Right cardiac atrium (tissue), 5 donors: ENCODE measurements at regions of chr1 and their contacts with region 1.

Region 1: DNA sequence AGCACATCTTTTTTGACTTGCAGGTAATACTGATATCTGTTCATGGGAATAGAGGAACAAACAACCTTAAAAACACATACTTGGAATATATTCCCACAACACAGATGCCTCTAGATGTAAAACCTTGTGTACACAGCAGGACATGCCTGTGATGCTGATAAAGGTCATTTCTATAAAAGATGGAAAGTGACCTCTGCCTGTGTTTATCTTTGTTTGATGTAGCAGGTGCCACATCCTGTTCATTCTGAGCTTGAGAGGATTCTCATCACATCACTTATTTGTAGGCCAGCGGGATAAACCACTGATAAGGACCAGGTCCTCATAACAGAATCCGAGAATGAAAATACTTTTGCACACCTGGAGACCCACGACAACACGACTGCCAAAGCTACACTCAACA is 133.7 kb downstream of the SMYD2 start:
- DNase-seq: no peak
- ATAC-seq: no peak
- H3K4me3 ChIP-seq: no peak overlapping the region
- H3K27ac ChIP-seq: no peak overlapping the region
- H3K4me1 ChIP-seq: peaks cover 9% of the 10 kb centered on the region
- H3K27me3 ChIP-seq: no peaks in the 10 kb centered on the region

Region 2: DNA sequence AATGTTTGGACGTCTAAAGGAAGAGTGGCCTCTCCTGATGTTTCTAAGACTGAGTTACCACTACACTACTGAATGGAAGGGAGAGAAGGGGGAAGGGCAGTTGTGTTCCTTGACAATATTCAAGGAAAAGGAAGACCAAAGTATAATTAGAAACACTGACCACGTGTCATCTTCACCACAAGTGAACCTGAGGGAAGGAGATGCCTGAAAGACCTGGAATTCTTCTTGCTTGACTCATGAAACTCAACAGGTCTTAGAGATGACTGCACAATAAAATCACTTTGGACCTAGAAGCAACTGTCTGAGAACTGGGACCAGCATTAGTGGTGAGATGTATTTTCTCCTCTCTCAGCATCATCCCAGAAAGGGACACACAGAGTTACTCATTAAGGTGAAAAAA is 80.0 kb after region 1 on chr1:
- intact Hi-C with region 1: loop called in 1 of 4 experiments (anchors 5 kb)
- DNase-seq: no peak
- ATAC-seq: no peak
- H3K4me3 ChIP-seq: no peak overlapping the region
- H3K27ac ChIP-seq: no peak overlapping the region
- H3K4me1 ChIP-seq: no peaks in the 10 kb centered on the region
- H3K27me3 ChIP-seq: no peaks in the 10 kb centered on the region